ENCODE measurements at regions of chr22 and their contacts with region 1.

Region 1: GRCh38 chr22:43036282-43036829 is 21.4 kb upstream of the PACSIN2 start:
- DNase-seq: peak; percentile 86 to 91 (median 90)
- ATAC-seq: peak; percentile 87 to 95
- H3K4me3 ChIP-seq: no peak overlapping the region
- H3K27ac ChIP-seq: no peak overlapping the region
- H3K4me1 ChIP-seq: no peaks in the 10 kb centered on the region
- H3K27me3 ChIP-seq: no peaks in the 10 kb centered on the region

Region 2: DNA sequence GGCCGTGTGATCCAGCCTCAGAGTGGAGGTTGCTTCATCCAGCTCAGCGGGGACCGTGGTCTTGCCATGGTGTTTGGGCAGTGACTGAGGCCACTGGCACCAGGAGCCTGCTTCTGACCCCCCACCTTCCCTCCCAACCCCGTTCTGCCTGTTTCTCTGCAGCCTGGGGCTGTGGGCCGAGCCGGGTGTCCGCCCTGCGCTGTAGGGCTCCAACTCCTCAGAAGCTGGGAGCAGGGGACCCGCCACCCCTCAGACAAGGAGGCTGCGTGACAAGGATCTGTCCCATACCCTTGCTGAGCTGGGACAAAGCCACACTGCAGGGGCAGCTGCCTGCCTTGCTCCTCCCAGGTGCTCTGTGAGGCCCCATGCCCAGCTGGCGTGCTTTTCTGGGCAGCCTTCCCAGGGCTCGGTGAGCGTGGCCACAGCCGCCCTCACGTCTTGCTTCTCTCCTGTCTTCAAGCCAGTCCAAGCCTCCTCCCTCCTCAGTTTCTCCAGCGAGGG is 167.6 kb before region 1 on chr22:
- intact Hi-C with region 1: loop called in 2 of 4 experiments (anchors 5 to 10 kb)
- DNase-seq: peak; percentile 44 to 85 (median 84)
- ATAC-seq: peak; percentile 44 to 58
- H3K4me3 ChIP-seq: no peak overlapping the region
- H3K27ac ChIP-seq: no peak overlapping the region
- H3K4me1 ChIP-seq: no peaks in the 10 kb centered on the region
- H3K27me3 ChIP-seq: no peaks in the 10 kb centered on the region